Activated CD8-positive, alpha-beta memory T cell treated with anti-CD3 and anti-CD28 coated beads, Interleukin-2, amount 10 ng/mL, durations not matched to agents 7 days and 5 days (primary cell): ENCODE measurements at regions of chr22 and their contacts with region 1.

Region 1: DNA sequence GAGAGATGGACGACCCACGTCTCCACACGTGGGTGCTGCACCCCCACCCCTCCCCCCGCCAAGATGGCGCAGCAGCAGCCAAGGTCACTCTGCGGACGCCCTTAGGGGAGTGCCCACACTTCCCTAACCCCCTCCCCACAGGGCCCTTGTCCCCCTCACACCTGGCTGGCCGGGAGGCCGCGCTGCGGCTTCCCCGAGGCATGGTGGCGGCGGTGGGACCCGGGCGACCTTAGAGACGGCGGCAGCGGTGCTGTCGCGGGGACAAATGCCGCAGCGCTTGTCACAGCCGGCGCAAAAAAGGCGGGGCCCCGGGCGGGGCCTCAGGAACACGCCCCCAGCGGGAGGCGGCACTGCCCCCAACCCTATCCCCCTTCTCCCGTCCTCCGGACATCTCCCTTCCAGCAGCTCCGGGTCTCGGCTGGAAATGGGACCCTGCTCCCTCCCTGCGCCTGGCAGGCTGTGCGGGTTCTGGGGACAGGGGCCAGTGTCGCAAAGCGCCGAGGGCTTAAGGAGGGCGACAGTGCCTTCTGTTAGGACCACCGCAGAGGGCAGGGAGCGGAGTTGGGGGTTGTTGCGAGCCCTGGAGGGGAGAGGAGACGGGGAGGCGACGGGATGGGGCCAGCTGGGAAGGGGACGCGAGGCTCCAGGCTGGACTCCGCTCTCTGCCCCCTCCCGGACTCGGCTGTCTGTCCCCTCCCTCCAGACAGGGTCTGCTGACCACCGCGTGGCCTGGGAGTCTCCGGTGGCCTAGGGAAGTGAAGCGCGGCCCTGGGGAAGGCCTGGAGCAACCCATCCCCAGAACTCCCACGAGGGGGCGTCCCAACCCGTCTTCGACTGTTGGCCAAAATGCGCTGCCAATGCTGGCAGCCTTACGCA is at the start of gene CHCHD10:
- DNase-seq: peak; percentile 85
- ATAC-seq: peak; percentile 71
- H3K4me3 Mint-ChIP-seq: peak within 1 kb of the TSS; percentile 75
- H3K27ac Mint-ChIP-seq: peak within 1 kb of the TSS; percentile 75
- H3K4me1 Mint-ChIP-seq: peaks cover 53% of the 10 kb centered on the region
- H3K27me3 Mint-ChIP-seq: no peaks in the 10 kb centered on the region
- total RNA-seq, gene CHCHD10: 155 to 159 TPM

Region 2: GRCh38 chr22:23754980-23755636 is 12.8 kb before region 1 on chr22:
- CTCF ChIA-PET with region 1: interaction called, 11 read pairs
- DNase-seq: no peak
- ATAC-seq: no peak
- H3K4me3 Mint-ChIP-seq: no peak overlapping the region
- H3K27ac Mint-ChIP-seq: no peak overlapping the region
- H3K4me1 Mint-ChIP-seq: peaks cover 14% of the 10 kb centered on the region
- H3K27me3 Mint-ChIP-seq: no peaks in the 10 kb centered on the region